Activated B cell treated with CpG ODN at 0.5 μM for 24 hours (primary cell): ENCODE measurements at regions of chr6 and their contacts with region 1.

Region 1: GRCh38 chr6:27893059-27893835 is 18.9 kb downstream of the OR2B2 start:
- DNase-seq: peak; percentile 67
- ATAC-seq: peak; percentile 71
- H3K4me3 Mint-ChIP-seq: no peak overlapping the region
- H3K27ac Mint-ChIP-seq: no peak overlapping the region
- H3K4me1 Mint-ChIP-seq: peaks cover 32% of the 10 kb centered on the region
- H3K27me3 Mint-ChIP-seq: no peaks in the 10 kb centered on the region
- CTCF ChIP-seq: no peak

Region 2: GRCh38 chr6:26045065-26045927 is 1848.0 kb before region 1 on chr6:
- CTCF ChIA-PET with region 1: no interaction called
- POLR2A ChIA-PET with region 1: interaction called, 18 read pairs
- intact Hi-C with region 1: no loop called
- DNase-seq: peak; percentile 51
- ATAC-seq: peak; percentile 58
- H3K4me3 Mint-ChIP-seq: peak overlapping the region; percentile 91
- H3K27ac Mint-ChIP-seq: peak overlapping the region; percentile 99
- H3K4me1 Mint-ChIP-seq: peaks cover 24% of the 10 kb centered on the region
- H3K27me3 Mint-ChIP-seq: no peaks in the 10 kb centered on the region
- CTCF ChIP-seq: no peak

Region 3: GRCh38 chr6:26270903-26271667 is 1622.2 kb before region 1 on chr6:
- CTCF ChIA-PET with region 1: no interaction called
- POLR2A ChIA-PET with region 1: interaction called, 20 read pairs
- intact Hi-C with region 1: no loop called
- DNase-seq: peak; percentile 49
- ATAC-seq: peak; percentile 18
- H3K4me3 Mint-ChIP-seq: no peak overlapping the region
- H3K27ac Mint-ChIP-seq: no peak overlapping the region
- H3K4me1 Mint-ChIP-seq: peaks cover 24% of the 10 kb centered on the region
- H3K27me3 Mint-ChIP-seq: no peaks in the 10 kb centered on the region
- CTCF ChIP-seq: no peak

Region 4: GRCh38 chr6:27146706-27147505 is 746.3 kb before region 1 on chr6:
- CTCF ChIA-PET with region 1: interaction called, 6 read pairs
- POLR2A ChIA-PET with region 1: interaction called, 152 read pairs
- intact Hi-C with region 1: loop called (anchors 1 kb)
- DNase-seq: peak; percentile 70
- ATAC-seq: peak; percentile 80
- H3K4me3 Mint-ChIP-seq: no peak overlapping the region
- H3K27ac Mint-ChIP-seq: no peak overlapping the region
- H3K4me1 Mint-ChIP-seq: peaks cover 26% of the 10 kb centered on the region
- H3K27me3 Mint-ChIP-seq: no peaks in the 10 kb centered on the region
- CTCF ChIP-seq: no peak

Region 5: DNA sequence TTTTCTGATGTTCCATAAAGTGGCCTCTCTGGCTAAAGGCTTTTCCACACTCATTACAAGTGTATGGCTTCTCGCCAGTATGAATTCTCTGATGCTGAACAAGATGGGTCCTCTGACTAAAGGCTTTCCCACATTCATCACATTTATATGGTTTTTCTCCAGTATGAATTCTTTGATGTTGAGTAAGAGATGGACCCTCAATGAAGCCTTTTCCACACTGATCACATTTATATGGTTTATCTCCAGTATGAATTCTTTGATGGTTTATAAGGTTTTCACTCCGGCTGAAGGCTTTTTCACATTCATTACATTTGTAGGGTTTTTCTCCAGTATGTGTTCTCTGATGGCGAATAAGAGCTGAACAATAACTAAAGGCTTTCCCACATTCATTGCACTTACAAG is 440.8 kb before region 1 on chr6:
- CTCF ChIA-PET with region 1: no interaction called
- POLR2A ChIA-PET with region 1: no interaction called
- intact Hi-C with region 1: no loop called
- DNase-seq: no peak
- ATAC-seq: no peak
- H3K4me3 Mint-ChIP-seq: no peak overlapping the region
- H3K27ac Mint-ChIP-seq: no peak overlapping the region
- H3K4me1 Mint-ChIP-seq: no peaks in the 10 kb centered on the region
- H3K27me3 Mint-ChIP-seq: no peaks in the 10 kb centered on the region
- CTCF ChIP-seq: no peak

Region 6: DNA sequence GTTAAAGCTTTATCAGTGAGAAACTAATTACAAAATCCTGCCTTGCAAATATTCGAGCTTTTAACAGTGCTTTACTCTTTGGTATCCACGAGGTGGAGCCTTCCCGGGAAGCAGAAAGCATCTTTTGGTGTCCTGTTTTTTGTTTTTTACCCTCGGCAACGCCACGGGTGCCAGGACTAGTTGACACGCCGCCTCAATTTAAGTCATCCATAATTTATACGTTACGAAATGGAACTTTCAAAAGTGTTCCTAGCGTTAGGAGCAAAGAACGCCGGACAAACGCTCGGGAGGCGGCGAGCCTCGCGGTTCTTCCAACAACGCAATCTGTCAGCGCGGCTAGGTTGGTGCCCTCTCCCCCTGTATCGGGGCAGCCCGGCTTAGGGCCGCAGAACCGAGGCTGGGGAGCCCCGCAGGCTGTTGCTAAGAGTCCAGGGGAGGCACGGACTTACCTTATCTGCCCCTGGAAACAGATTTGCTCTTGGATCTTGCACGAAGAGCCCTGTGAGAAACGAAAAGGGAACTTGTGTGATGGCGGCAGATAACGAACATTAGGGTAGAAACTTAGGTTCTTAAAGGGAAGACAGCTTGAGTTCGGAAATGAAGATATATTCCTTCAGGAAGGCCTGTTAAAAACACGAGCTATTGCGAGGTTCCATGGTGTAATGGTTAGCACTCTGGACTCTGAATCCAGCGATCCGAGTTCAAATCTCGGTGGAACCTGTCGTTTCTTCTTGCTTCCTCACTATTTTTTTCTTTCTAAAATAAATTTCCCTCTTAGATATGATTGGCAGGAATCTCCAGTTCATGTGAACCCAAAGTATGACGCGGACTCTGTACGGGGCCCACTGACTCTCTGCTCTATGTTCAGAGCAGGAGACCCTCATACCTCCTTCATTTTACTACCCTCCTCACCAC is 374.1 kb before region 1 on chr6:
- CTCF ChIA-PET with region 1: interaction called, 25 read pairs
- POLR2A ChIA-PET with region 1: interaction called, 5 read pairs
- intact Hi-C with region 1: loop called (anchors 1 kb)
- DNase-seq: peak; percentile 48
- ATAC-seq: peak; percentile 72
- H3K4me3 Mint-ChIP-seq: peak overlapping the region; percentile 83
- H3K27ac Mint-ChIP-seq: peak overlapping the region; percentile 82
- H3K4me1 Mint-ChIP-seq: peaks cover 15% of the 10 kb centered on the region
- H3K27me3 Mint-ChIP-seq: peaks cover 30% of the 10 kb centered on the region
- CTCF ChIP-seq: no peak

Region 7: DNA sequence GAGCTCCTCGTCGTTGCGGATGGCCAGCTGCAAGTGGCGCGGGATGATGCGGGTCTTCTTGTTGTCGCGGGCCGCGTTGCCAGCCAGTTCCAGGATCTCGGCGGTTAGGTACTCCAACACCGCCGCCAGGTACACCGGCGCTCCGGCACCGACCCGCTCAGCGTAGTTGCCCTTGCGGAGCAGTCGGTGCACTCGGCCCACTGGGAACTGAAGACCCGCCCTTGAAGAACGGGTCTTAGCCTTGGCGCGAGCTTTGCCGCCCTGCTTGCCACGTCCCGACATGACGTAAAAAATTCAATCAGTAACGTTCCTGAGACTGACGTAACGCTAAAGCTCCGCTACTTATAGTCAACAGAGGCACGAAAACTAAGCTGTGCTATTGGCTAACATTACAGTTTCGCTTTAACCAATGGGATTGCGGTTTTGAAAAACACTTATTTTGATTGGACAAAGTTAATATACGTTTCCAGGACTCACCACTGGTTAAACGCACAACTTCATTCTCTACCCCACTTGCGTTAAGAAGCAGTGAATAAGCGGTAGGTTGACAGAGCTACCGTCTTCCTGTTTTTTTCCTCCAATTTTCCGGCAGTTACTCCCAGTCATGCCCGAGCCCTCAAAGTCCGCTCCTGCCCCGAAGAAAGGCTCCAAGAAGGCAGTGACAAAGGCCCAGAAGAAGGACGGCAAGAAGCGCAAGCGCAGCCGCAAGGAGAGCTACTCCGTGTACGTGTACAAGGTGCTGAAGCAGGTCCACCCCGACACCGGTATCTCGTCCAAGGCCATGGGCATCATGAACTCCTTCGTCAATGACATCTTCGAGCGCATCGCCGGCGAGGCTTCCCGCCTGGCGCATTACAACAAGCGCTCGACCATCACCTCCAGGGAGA is 54.9 kb before region 1 on chr6:
- CTCF ChIA-PET with region 1: interaction called, 9 read pairs
- POLR2A ChIA-PET with region 1: interaction called, 267 read pairs
- intact Hi-C with region 1: loop called (anchors 1 kb)
- DNase-seq: peak; percentile 73
- ATAC-seq: peak; percentile 76
- H3K4me3 Mint-ChIP-seq: no peak overlapping the region
- H3K27ac Mint-ChIP-seq: no peak overlapping the region
- H3K4me1 Mint-ChIP-seq: peaks cover 18% of the 10 kb centered on the region
- H3K27me3 Mint-ChIP-seq: no peaks in the 10 kb centered on the region
- CTCF ChIP-seq: no peak

Region 8: GRCh38 chr6:28895134-28895812 is 1002.0 kb after region 1 on chr6:
- CTCF ChIA-PET with region 1: no interaction called
- POLR2A ChIA-PET with region 1: interaction called, 6 read pairs
- intact Hi-C with region 1: loop called (anchors 5 kb)
- DNase-seq: peak; percentile 66
- ATAC-seq: peak; percentile 66
- H3K4me3 Mint-ChIP-seq: peak overlapping the region; percentile 97
- H3K27ac Mint-ChIP-seq: peak overlapping the region; percentile 99
- H3K4me1 Mint-ChIP-seq: peaks cover 23% of the 10 kb centered on the region
- H3K27me3 Mint-ChIP-seq: peaks cover 3% of the 10 kb centered on the region
- CTCF ChIP-seq: no peak